Activated CD4-positive, alpha-beta T cell treated with anti-CD3 and anti-CD28 coated beads for 36 hours (primary cell): ENCODE measurements at regions of chr10 and their contacts with region 1.

Region 1: GRCh38 chr10:102917962-102918816 is at the start of gene CNNM2:
- DNase-seq: peak; percentile 100
- ATAC-seq: peak; percentile 93
- H3K4me3 Mint-ChIP-seq: peak within 1 kb of the TSS; percentile 83
- H3K27ac Mint-ChIP-seq: peak within 1 kb of the TSS; percentile 88
- H3K4me1 Mint-ChIP-seq: peaks cover 53% of the 10 kb centered on the region
- H3K27me3 Mint-ChIP-seq: peaks cover 14% of the 10 kb centered on the region
- total RNA-seq, gene CNNM2: 4.2 to 4.5 TPM

Region 2: DNA sequence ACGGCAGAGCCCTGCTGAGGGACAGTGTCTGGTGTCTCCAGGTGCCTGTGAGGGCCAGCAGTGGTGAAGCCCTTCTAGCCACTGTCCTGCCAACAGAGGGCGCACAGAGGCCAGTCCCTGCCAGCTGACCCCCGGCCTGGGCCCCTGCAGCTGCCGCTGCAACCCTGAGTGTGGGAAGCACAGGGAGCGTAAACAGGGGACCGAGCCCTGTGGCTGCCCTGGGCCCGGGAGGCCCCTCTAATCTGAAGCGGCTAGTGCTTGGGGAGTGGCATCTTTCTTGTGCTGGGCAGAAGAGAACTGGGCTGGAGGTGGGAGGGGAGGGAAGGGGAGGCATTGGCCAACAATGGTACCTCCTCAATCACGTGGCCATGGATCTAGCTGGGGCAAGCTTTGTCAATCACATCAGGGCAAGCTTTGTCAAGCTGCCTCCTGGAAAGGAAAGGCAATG is 239.3 kb before region 1 on chr10:
- CTCF ChIA-PET with region 1: no interaction called
- POLR2A ChIA-PET with region 1: no interaction called
- intact Hi-C with region 1: no loop called
- DNase-seq: peak; percentile 53
- ATAC-seq: no peak
- H3K4me3 Mint-ChIP-seq: no peak overlapping the region
- H3K27ac Mint-ChIP-seq: no peak overlapping the region
- H3K4me1 Mint-ChIP-seq: peaks cover 45% of the 10 kb centered on the region
- H3K27me3 Mint-ChIP-seq: no peaks in the 10 kb centered on the region

Region 3: GRCh38 chr10:102743588-102744373 is 174.4 kb before region 1 on chr10 and contains the start of gene WBP1L:
- CTCF ChIA-PET with region 1: interaction called, 6 read pairs
- POLR2A ChIA-PET with region 1: no interaction called
- intact Hi-C with region 1: loop called in 1 of 2 experiments (anchors 1 kb)
- DNase-seq: peak; percentile 96
- ATAC-seq: peak; percentile 98
- H3K4me3 Mint-ChIP-seq: peak within 1 kb of the TSS; percentile 92
- H3K27ac Mint-ChIP-seq: peak within 1 kb of the TSS; percentile 82
- H3K4me1 Mint-ChIP-seq: peaks cover 42% of the 10 kb centered on the region
- H3K27me3 Mint-ChIP-seq: no peaks in the 10 kb centered on the region
- total RNA-seq, gene WBP1L: 14.9 to 16.4 TPM

Region 4: DNA sequence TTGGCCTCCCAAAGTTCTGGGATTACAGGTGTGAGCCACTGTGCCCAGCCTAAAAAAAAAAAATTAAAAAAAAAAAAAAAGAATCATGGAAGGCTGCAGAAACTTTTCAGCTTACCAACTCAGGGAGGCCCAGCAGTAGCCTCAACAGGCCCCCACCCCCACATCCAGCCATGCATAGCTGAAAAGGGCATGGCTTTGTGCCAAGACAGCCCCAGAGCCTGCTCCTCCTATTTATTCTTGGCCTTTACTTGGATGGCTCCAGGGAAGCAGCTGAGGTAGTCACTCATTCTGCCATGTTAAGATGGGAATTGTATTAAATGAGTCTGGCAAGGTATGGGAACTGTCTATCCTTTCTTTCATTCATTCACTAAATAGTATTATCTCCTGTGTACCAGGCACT is 13.8 kb before region 1 on chr10:
- CTCF ChIA-PET with region 1: interaction called, 14 read pairs
- POLR2A ChIA-PET with region 1: interaction called, 3 read pairs
- intact Hi-C with region 1: no loop called
- DNase-seq: no peak
- ATAC-seq: no peak
- H3K4me3 Mint-ChIP-seq: no peak overlapping the region
- H3K27ac Mint-ChIP-seq: no peak overlapping the region
- H3K4me1 Mint-ChIP-seq: no peaks in the 10 kb centered on the region
- H3K27me3 Mint-ChIP-seq: no peaks in the 10 kb centered on the region

Region 5: GRCh38 chr10:103062604-103063590 is 144.7 kb after region 1 on chr10:
- CTCF ChIA-PET with region 1: interaction called, 22 read pairs
- POLR2A ChIA-PET with region 1: no interaction called
- intact Hi-C with region 1: no loop called
- DNase-seq: no peak
- ATAC-seq: no peak
- H3K4me3 Mint-ChIP-seq: no peak overlapping the region
- H3K27ac Mint-ChIP-seq: no peak overlapping the region
- H3K4me1 Mint-ChIP-seq: no peaks in the 10 kb centered on the region
- H3K27me3 Mint-ChIP-seq: no peaks in the 10 kb centered on the region

Region 6: GRCh38 chr10:103244663-103245271 is 326.6 kb after region 1 on chr10:
- CTCF ChIA-PET with region 1: interaction called, 21 read pairs
- POLR2A ChIA-PET with region 1: no interaction called
- intact Hi-C with region 1: loop called (anchors 1 kb)
- DNase-seq: peak; percentile 80
- ATAC-seq: peak; percentile 81
- H3K4me3 Mint-ChIP-seq: no peak overlapping the region
- H3K27ac Mint-ChIP-seq: no peak overlapping the region
- H3K4me1 Mint-ChIP-seq: peaks cover 12% of the 10 kb centered on the region
- H3K27me3 Mint-ChIP-seq: peaks cover 2% of the 10 kb centered on the region

Region 7: DNA sequence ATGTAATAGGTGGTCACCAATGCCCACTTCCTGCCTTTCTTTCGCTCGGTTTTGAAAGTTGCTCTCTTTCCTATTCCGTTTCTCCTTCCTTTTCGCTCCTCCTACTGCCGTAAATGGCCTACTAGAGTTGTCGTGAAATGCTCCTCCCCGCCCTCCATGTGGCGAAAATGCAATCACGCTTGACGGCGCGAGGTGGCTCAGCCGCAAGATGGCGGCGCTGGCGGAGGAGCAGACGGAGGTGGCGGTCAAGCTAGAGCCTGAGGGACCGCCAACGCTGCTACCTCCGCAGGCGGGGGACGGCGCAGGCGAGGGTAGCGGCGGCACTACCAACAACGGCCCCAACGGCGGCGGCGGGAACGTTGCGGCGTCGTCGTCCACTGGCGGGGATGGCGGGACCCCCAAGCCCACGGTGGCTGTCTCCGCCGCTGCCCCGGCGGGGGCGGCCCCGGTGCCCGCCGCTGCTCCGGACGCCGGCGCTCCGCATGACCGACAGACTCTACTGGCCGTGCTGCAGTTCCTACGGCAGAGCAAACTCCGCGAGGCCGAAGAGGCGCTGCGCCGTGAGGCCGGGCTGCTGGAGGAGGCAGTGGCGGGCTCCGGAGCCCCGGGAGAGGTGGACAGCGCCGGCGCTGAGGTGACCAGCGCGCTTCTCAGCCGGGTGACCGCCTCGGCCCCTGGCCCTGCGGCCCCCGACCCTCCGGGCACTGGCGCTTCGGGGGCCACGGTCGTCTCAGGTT is 449.8 kb after region 1 on chr10 and contains the start of gene TAF5:
- CTCF ChIA-PET with region 1: interaction called, 4 read pairs
- POLR2A ChIA-PET with region 1: no interaction called
- intact Hi-C with region 1: loop called in 1 of 2 experiments (anchors 1 kb)
- DNase-seq: peak; percentile 95
- ATAC-seq: peak; percentile 61
- H3K4me3 Mint-ChIP-seq: peak within 1 kb of the TSS; percentile 81
- H3K27ac Mint-ChIP-seq: peak within 1 kb of the TSS; percentile 85
- H3K4me1 Mint-ChIP-seq: peaks cover 16% of the 10 kb centered on the region
- H3K27me3 Mint-ChIP-seq: no peaks in the 10 kb centered on the region
- total RNA-seq, gene TAF5: 11.2 to 11.4 TPM